B cell (primary cell): ENCODE measurements at regions of chr1 and their contacts with region 1.

Region 1: DNA sequence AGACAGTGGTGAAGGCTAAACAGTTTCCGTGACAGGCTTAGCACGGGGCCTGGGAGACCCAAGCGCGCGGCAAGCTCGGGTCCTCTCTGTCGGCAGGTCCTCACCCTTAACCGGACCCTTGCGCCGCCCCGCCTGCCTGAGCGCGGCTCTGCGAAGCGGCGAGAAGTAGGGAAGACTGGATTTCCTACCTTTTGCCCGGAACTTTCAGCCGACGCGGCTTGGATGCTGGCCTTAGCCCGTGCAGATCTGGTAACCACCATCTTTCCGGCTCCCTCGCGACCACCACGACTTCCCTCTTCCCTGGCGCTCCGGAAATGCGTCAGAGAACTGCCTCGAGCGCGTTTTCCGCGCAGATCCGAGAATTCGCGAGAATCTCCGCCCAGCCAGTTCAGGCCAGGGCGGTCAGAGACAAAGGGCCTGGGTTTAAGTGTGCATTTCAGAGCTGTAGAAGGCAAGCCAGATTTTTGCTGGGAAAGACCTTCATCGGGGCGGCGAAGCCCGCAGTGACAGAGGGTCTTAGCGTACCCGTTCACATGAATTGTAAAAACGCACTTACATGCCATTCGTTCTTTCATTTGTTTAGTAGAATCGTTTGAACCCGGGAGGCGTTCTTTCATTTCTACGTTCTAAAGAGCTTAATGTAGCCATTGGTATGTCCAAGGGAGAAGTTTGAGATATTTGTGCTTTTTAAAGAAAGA is at the start of gene DNTTIP2:
- DNase-seq: peak; percentile 91
- ATAC-seq: peak; percentile 89
- H3K4me3 ChIP-seq: peak within 1 kb of the TSS; percentile 82 to 99 (median 96)
- H3K4me3 Mint-ChIP-seq: peak within 1 kb of the TSS; percentile 98
- H3K27ac ChIP-seq: peak within 1 kb of the TSS; percentile 89 to 94
- H3K27ac Mint-ChIP-seq: peak within 1 kb of the TSS; percentile 100
- H3K4me1 ChIP-seq: peaks cover 26 to 30% of the 10 kb centered on the region in 2 donors
- H3K4me1 Mint-ChIP-seq: peaks cover 42% of the 10 kb centered on the region
- H3K27me3 ChIP-seq: no peaks in the 10 kb centered on the region
- H3K27me3 Mint-ChIP-seq: no peaks in the 10 kb centered on the region
- CTCF ChIP-seq: no peak
- total RNA-seq, gene DNTTIP2: 58.3 and 62.1 TPM in 2 replicates

Region 2: GRCh38 chr1:93437976-93438605 is 440.9 kb before region 1 on chr1:
- CTCF ChIA-PET with region 1: no interaction called
- POLR2A ChIA-PET with region 1: no interaction called
- intact Hi-C with region 1: loop called (anchors 10 kb)
- DNase-seq: peak; percentile 67
- ATAC-seq: peak; percentile 64
- H3K4me3 ChIP-seq: no peak overlapping the region
- H3K4me3 Mint-ChIP-seq: no peak overlapping the region
- H3K27ac ChIP-seq: no peak overlapping the region
- H3K27ac Mint-ChIP-seq: no peak overlapping the region
- H3K4me1 ChIP-seq: no peaks in the 10 kb centered on the region
- H3K4me1 Mint-ChIP-seq: no peaks in the 10 kb centered on the region
- H3K27me3 ChIP-seq: peaks cover 0 to 10% (median 0%) of the 10 kb centered on the region in 4 experiments
- H3K27me3 Mint-ChIP-seq: peaks cover 15% of the 10 kb centered on the region
- CTCF ChIP-seq: peak; percentile 77

Region 3: GRCh38 chr1:93904228-93904627 is 25.2 kb after region 1 on chr1:
- CTCF ChIA-PET with region 1: interaction called, 16 read pairs
- POLR2A ChIA-PET with region 1: interaction called, 6 read pairs
- intact Hi-C with region 1: loop called (anchors 1 kb)
- DNase-seq: peak; percentile 52
- ATAC-seq: no peak
- H3K4me3 ChIP-seq: peak overlapping the region in 1 of 5 experiments; percentile 12
- H3K4me3 Mint-ChIP-seq: peak overlapping the region; percentile 61
- H3K27ac ChIP-seq: peak overlapping the region; percentile 2 to 56
- H3K27ac Mint-ChIP-seq: peak overlapping the region; percentile 85
- H3K4me1 ChIP-seq: peaks cover 18 to 24% of the 10 kb centered on the region in 2 donors
- H3K4me1 Mint-ChIP-seq: peaks cover 27% of the 10 kb centered on the region
- H3K27me3 ChIP-seq: no peaks in the 10 kb centered on the region
- H3K27me3 Mint-ChIP-seq: no peaks in the 10 kb centered on the region
- CTCF ChIP-seq: no peak

Region 4: GRCh38 chr1:94237291-94238226 is 358.5 kb after region 1 on chr1 and contains the start of gene ARHGAP29:
- CTCF ChIA-PET with region 1: no interaction called
- POLR2A ChIA-PET with region 1: no interaction called
- intact Hi-C with region 1: no loop called
- DNase-seq: peak; percentile 64
- ATAC-seq: peak; percentile 85
- H3K4me3 ChIP-seq: peak within 1 kb of the TSS; percentile 4 to 60 (median 41)
- H3K4me3 Mint-ChIP-seq: peak within 1 kb of the TSS; percentile 72
- H3K27ac ChIP-seq: no peak within 1 kb of the TSS
- H3K27ac Mint-ChIP-seq: no peak within 1 kb of the TSS
- H3K4me1 ChIP-seq: peaks cover 13 to 24% of the 10 kb centered on the region in 2 donors
- H3K4me1 Mint-ChIP-seq: peaks cover 9% of the 10 kb centered on the region
- H3K27me3 ChIP-seq: peaks cover 0 to 54% (median 32%) of the 10 kb centered on the region in 4 experiments
- H3K27me3 Mint-ChIP-seq: peaks cover 64% of the 10 kb centered on the region
- CTCF ChIP-seq: no peak
- total RNA-seq, gene ARHGAP29: not detected in 2 replicates